B cell (primary cell): ENCODE measurements at regions of chr6 and their contacts with region 1.

Region 1: DNA sequence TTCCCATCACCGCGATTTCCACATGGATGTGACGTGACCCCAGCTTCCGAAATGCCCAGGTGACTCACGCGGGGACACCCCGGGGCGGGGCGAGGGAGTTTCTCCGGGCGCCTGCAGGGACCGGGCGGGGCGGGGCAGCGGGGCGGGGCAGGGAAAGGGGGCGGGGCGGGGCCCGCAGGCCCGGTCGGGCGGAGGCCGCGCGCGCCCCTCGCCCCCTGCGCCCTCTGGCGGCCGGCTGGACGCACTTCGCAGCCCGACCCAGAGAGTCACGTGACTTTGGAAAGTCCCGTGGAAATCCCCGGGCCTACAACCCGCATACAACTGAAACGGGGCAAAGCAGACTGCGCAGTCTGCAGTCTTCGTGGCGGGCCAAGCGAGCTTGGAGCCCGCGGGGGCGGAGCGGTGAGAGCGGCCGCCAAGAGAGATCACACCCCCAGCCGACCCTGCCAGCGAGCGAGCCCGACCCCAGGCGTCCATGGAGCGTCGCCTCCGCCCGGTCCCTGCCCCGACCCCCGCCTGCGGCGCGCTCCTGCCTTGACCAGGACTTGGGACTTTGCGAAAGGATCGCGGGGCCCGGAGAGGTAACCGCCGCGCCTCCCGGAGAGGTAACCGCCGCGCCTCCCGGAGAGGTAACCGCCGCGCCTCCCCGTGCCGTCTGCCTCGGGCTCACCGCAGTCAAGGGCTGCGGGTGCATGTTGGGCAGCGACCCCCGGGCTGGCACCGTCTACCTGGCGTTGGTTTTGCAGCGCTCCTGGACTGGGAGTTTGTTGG is at the start of gene TNFAIP3:
- DNase-seq: peak; percentile 99
- ATAC-seq: peak; percentile 80
- H3K4me3 ChIP-seq: peak within 1 kb of the TSS; percentile 95 to 99 (median 96)
- H3K4me3 Mint-ChIP-seq: peak within 1 kb of the TSS; percentile 94
- H3K27ac ChIP-seq: peak within 1 kb of the TSS; percentile 96 to 97
- H3K27ac Mint-ChIP-seq: peak within 1 kb of the TSS; percentile 99
- H3K4me1 ChIP-seq: peaks cover 40 to 43% of the 10 kb centered on the region in 2 donors
- H3K4me1 Mint-ChIP-seq: peaks cover 50% of the 10 kb centered on the region
- H3K27me3 ChIP-seq: no peaks in the 10 kb centered on the region
- H3K27me3 Mint-ChIP-seq: no peaks in the 10 kb centered on the region
- CTCF ChIP-seq: peak; percentile 73
- total RNA-seq, gene TNFAIP3: 92.0 and 92.2 TPM in 2 replicates

Region 2: DNA sequence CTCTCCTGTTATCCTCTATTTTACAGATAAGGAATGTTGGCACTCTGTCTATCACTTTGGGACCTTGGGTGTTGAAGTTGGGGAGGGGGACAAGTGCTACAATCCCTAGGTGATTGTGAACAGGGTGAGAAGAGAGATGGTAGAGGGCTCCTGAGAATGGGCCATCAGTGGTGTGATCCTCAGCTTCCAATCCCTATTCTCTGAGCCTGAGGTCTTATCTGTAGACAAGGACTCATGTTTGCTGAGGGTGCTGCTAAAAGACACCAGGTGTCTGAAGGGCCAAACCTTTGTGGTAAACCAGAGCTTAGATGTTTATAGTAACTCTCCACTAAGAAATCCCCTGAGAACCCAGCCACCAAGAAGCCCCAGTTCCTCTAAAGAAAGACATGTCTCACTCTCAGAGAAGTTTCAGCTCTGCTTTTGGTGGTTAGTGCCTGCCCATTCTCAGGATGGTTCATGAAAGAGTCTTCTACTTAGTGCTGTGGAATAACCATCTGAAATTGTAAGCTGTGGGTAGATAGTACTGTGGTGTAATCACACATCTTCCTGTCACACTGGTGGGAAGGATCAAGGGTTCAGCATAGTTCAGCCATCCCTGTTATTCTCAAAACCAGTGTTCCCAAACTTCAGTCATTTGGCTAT is 764.1 kb before region 1 on chr6:
- CTCF ChIA-PET with region 1: no interaction called
- POLR2A ChIA-PET with region 1: no interaction called
- intact Hi-C with region 1: loop called (anchors 5 kb)
- DNase-seq: peak; percentile 92
- ATAC-seq: peak; percentile 81
- H3K4me3 ChIP-seq: peak overlapping the region in 4 of 5 experiments; percentile 8 to 49 (median 16)
- H3K4me3 Mint-ChIP-seq: peak overlapping the region; percentile 86
- H3K27ac ChIP-seq: peak overlapping the region; percentile 97
- H3K27ac Mint-ChIP-seq: peak overlapping the region; percentile 99
- H3K4me1 ChIP-seq: peaks cover 89 to 91% of the 10 kb centered on the region in 2 donors
- H3K4me1 Mint-ChIP-seq: peaks cover 87% of the 10 kb centered on the region
- H3K27me3 ChIP-seq: no peaks in the 10 kb centered on the region
- H3K27me3 Mint-ChIP-seq: no peaks in the 10 kb centered on the region
- CTCF ChIP-seq: no peak

Region 3: DNA sequence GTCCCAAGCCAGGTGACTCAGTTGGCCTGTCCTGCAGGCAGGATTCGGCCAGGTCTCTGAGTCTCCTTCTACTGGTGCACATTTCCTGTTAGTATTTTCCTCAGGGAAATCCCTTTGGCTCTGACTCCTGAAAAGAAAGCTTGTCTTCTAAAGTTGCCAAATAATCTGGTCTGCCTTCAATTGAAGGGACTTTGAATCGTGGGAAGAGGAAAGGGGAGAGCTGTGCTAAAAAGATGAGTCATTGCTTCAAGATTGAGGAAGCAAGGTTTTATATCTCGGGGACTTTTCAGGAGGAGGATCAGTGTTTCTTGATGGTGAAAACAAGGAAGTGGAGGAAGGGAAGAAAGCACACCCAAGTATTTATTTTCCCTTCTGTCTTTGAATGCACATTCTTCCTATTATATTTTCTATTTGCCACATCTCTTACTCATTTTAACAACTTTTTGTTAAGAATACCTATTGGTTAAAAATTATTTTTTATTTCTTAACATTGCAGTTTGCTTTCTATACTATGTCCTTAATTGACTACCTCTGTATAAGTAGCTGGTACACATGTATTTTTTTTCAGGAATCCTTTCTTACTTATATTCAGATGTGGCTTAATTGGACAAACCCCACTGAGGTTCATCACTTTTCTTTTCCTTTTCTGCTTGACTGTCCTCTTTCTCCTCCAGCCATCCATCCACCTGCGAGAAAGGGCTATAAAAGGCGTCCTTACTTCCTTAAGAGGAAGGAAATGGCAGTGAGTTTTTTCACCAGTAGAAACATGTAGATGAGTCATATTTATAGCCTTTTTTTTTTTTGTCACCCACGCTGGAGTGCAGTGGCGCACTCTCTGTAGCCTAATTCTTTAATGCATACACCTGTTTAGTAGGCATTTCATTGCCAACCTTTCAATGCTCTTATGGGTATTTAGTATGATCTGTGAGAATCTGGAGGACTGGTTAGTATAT is 632.9 kb before region 1 on chr6:
- CTCF ChIA-PET with region 1: no interaction called
- POLR2A ChIA-PET with region 1: no interaction called
- intact Hi-C with region 1: loop called (anchors 5 kb)
- DNase-seq: peak; percentile 65
- ATAC-seq: peak; percentile 78
- H3K4me3 ChIP-seq: peak overlapping the region in 2 of 5 experiments; percentile 13 to 42
- H3K4me3 Mint-ChIP-seq: peak overlapping the region; percentile 80
- H3K27ac ChIP-seq: peak overlapping the region; percentile 29 to 58
- H3K27ac Mint-ChIP-seq: peak overlapping the region; percentile 87
- H3K4me1 ChIP-seq: peaks cover 58 to 59% of the 10 kb centered on the region in 2 donors
- H3K4me1 Mint-ChIP-seq: peaks cover 69% of the 10 kb centered on the region
- H3K27me3 ChIP-seq: no peaks in the 10 kb centered on the region
- H3K27me3 Mint-ChIP-seq: no peaks in the 10 kb centered on the region
- CTCF ChIP-seq: no peak

Region 4: GRCh38 chr6:137811121-137811915 is 55.8 kb before region 1 on chr6:
- CTCF ChIA-PET with region 1: interaction called, 16 read pairs
- POLR2A ChIA-PET with region 1: interaction called, 7 read pairs
- intact Hi-C with region 1: loop called (anchors 1 kb)
- DNase-seq: peak; percentile 92
- ATAC-seq: peak; percentile 98
- H3K4me3 ChIP-seq: peak overlapping the region in 4 of 5 experiments; percentile 14 to 54 (median 26)
- H3K4me3 Mint-ChIP-seq: peak overlapping the region; percentile 73
- H3K27ac ChIP-seq: peak overlapping the region; percentile 85 to 91
- H3K27ac Mint-ChIP-seq: peak overlapping the region; percentile 87
- H3K4me1 ChIP-seq: peaks cover 20 to 26% of the 10 kb centered on the region in 2 donors
- H3K4me1 Mint-ChIP-seq: peaks cover 27% of the 10 kb centered on the region
- H3K27me3 ChIP-seq: no peaks in the 10 kb centered on the region
- H3K27me3 Mint-ChIP-seq: no peaks in the 10 kb centered on the region
- CTCF ChIP-seq: no peak

Region 5: DNA sequence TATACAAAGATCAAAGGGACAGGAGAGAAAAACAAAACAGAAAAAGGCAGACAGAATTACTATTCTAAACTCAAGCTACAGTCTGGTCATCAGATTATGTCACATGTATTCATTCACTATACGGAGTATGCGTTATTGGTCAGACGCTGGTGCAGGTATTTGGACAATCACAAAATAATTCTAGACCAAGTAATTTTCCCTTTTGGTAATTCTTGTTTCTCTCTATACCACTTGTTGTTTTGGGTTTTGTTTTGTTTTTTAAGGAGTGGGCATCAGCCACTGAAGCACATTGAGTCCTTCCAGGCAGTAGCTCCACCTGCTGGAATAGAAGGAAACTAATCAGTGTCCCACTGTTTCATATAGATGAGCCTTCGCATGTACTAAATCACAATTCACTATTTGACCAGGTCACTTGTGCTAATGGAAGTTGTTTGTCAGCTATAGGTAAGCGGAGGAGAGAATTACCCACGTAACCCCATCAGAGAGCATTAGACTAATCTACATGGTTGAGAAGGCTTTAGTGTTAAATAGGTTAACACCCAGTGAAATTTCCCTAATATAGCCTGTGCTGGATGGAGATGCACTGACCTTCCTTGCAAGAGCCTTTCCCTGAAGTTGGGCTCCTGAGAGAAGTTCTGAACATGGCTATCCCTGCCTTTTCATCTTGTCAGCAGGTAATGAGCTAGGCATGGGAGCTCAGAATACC is 77.8 kb after region 1 on chr6:
- CTCF ChIA-PET with region 1: interaction called, 199 read pairs
- POLR2A ChIA-PET with region 1: interaction called, 4 read pairs
- intact Hi-C with region 1: loop called (anchors 1 kb)
- DNase-seq: peak; percentile 66
- ATAC-seq: peak; percentile 72
- H3K4me3 ChIP-seq: no peak overlapping the region
- H3K4me3 Mint-ChIP-seq: no peak overlapping the region
- H3K27ac ChIP-seq: no peak overlapping the region
- H3K27ac Mint-ChIP-seq: no peak overlapping the region
- H3K4me1 ChIP-seq: peaks cover 15 to 19% of the 10 kb centered on the region in 2 donors
- H3K4me1 Mint-ChIP-seq: peaks cover 22% of the 10 kb centered on the region
- H3K27me3 ChIP-seq: no peaks in the 10 kb centered on the region
- H3K27me3 Mint-ChIP-seq: no peaks in the 10 kb centered on the region
- CTCF ChIP-seq: peak; percentile 87

Region 6: GRCh38 chr6:138773177-138774091 is 906.3 kb after region 1 on chr6 and contains the start of gene CCDC28A:
- CTCF ChIA-PET with region 1: no interaction called
- POLR2A ChIA-PET with region 1: no interaction called
- intact Hi-C with region 1: loop called (anchors 2 kb)
- DNase-seq: peak; percentile 97
- ATAC-seq: peak; percentile 84
- H3K4me3 ChIP-seq: peak within 1 kb of the TSS; percentile 83 to 98 (median 86)
- H3K4me3 Mint-ChIP-seq: peak within 1 kb of the TSS; percentile 99
- H3K27ac ChIP-seq: peak within 1 kb of the TSS; percentile 92 to 97
- H3K27ac Mint-ChIP-seq: peak within 1 kb of the TSS; percentile 99
- H3K4me1 ChIP-seq: peaks cover 21 to 28% of the 10 kb centered on the region in 2 donors
- H3K4me1 Mint-ChIP-seq: peaks cover 32% of the 10 kb centered on the region
- H3K27me3 ChIP-seq: no peaks in the 10 kb centered on the region
- H3K27me3 Mint-ChIP-seq: no peaks in the 10 kb centered on the region
- CTCF ChIP-seq: no peak
- total RNA-seq, gene CCDC28A: 26.3 and 26.9 TPM in 2 replicates